ENCODE measurements at regions of chr1 and their contacts with region 1.

Region 1: GRCh38 chr1:246012341-246012740 is 494.7 kb downstream of the SMYD3 start:
- DNase-seq: peak in 2 of 5 donors; percentile 3 to 11
- H3K4me3 ChIP-seq: no peak overlapping the region
- H3K4me3 Mint-ChIP-seq: no peak overlapping the region
- H3K27ac ChIP-seq: no peak overlapping the region
- H3K27ac Mint-ChIP-seq: no peak overlapping the region
- H3K4me1 ChIP-seq: no peaks in the 10 kb centered on the region
- H3K4me1 Mint-ChIP-seq: no peaks in the 10 kb centered on the region
- H3K27me3 ChIP-seq: no peaks in the 10 kb centered on the region
- H3K27me3 Mint-ChIP-seq: no peaks in the 10 kb centered on the region

Region 2: DNA sequence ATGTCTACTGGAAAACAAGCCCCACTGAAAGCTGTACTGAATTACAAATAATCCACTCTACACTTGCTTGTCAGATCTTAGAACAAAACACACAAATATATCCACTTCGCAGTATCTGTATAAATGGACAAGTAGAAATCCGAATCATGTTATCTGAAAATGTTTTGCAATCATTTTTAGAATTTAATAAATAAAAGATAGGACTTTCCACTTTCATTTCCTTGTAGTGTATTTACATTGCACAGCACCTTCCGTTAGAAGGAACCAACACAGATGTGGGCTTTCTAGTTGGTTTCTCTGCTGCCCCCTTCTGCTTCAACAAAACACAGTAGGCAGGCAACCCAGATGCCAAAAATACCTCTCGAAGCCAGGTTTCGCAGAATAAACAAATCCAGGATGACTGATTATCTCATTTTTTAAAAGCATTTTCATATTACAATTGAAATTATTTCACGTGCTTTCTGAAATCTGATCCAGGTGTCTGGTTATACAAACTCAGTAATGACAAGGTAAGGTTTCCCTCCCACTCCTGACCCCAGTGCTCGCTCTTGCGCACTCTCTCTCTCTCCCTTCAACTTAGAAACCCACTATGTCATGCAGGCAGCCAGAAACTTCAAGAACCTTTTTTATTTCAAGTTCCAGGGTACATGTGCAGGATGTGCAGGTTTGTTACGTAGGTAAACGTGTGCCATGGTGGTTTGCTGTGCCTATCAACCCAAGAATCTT is 104.9 kb after region 1 on chr1:
- CTCF ChIA-PET with region 1: no interaction called
- POLR2A ChIA-PET with region 1: no interaction called
- intact Hi-C with region 1: loop called (anchors 1 kb)
- DNase-seq: peak; percentile 71 to 83 (median 76)
- H3K4me3 ChIP-seq: no peak overlapping the region
- H3K4me3 Mint-ChIP-seq: peak overlapping the region; percentile 49 to 90 (median 72)
- H3K27ac ChIP-seq: peak overlapping the region; percentile 19
- H3K27ac Mint-ChIP-seq: peak overlapping the region; percentile 70 to 90 (median 86)
- H3K4me1 ChIP-seq: peaks cover 23% of the 10 kb centered on the region
- H3K4me1 Mint-ChIP-seq: peaks cover 6 to 24% (median 10%) of the 10 kb centered on the region in 4 donors
- H3K27me3 ChIP-seq: no peaks in the 10 kb centered on the region
- H3K27me3 Mint-ChIP-seq: no peaks in the 10 kb centered on the region

Region 3: DNA sequence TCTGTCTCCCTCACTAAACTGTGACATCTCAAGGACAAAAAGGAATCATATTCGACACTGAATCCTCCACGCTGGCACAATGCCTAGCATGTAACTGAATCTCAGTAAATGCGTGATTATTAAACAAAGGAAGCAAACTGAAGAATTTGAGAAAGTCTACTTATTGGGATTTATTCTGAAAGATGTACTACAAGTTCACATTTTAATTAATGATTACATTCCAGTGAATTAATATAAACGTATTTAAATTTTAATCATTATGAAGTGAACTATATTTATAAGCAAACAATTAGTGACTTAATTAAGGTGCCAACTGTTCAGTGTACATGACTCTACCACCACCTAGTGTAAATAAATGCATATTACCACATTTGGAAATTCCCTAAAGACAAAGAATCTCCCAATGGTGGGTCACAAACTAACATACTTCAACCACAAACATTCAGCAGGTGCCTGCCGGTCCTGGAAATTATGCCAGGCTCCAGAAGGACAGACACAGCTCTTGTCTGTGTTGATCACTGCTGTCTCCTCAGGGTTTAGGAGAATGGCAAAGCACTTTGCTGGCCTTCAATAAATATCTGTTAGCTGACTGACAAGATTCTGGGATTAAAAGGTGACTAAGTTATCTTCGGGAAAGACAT is 438.4 kb after region 1 on chr1:
- CTCF ChIA-PET with region 1: interaction called, 3 read pairs
- POLR2A ChIA-PET with region 1: no interaction called
- intact Hi-C with region 1: loop called (anchors 2 kb)
- DNase-seq: peak in 1 of 5 donors; percentile 9
- H3K4me3 ChIP-seq: no peak overlapping the region
- H3K4me3 Mint-ChIP-seq: no peak overlapping the region
- H3K27ac ChIP-seq: no peak overlapping the region
- H3K27ac Mint-ChIP-seq: no peak overlapping the region
- H3K4me1 ChIP-seq: no peaks in the 10 kb centered on the region
- H3K4me1 Mint-ChIP-seq: no peaks in the 10 kb centered on the region
- H3K27me3 ChIP-seq: no peaks in the 10 kb centered on the region
- H3K27me3 Mint-ChIP-seq: no peaks in the 10 kb centered on the region

Region 4: GRCh38 chr1:246753670-246754535 is 741.6 kb after region 1 on chr1:
- CTCF ChIA-PET with region 1: interaction called, 5 read pairs
- POLR2A ChIA-PET with region 1: no interaction called
- intact Hi-C with region 1: loop called (anchors 5 kb)
- DNase-seq: peak; percentile 27 to 49 (median 37)
- H3K4me3 ChIP-seq: no peak overlapping the region
- H3K4me3 Mint-ChIP-seq: no peak overlapping the region
- H3K27ac ChIP-seq: no peak overlapping the region
- H3K27ac Mint-ChIP-seq: peak overlapping the region in 1 of 7 donors; percentile 25
- H3K4me1 ChIP-seq: no peaks in the 10 kb centered on the region
- H3K4me1 Mint-ChIP-seq: no peaks in the 10 kb centered on the region
- H3K27me3 ChIP-seq: no peaks in the 10 kb centered on the region
- H3K27me3 Mint-ChIP-seq: no peaks in the 10 kb centered on the region